Activated CD8-positive, alpha-beta T cell treated with anti-CD3 and anti-CD28 coated beads, Interleukin-2, amount 10 ng/mL, durations not matched to agents 7 days and 5 days (primary cell): ENCODE measurements at regions of chr4 and their contacts with region 1.

Region 1: DNA sequence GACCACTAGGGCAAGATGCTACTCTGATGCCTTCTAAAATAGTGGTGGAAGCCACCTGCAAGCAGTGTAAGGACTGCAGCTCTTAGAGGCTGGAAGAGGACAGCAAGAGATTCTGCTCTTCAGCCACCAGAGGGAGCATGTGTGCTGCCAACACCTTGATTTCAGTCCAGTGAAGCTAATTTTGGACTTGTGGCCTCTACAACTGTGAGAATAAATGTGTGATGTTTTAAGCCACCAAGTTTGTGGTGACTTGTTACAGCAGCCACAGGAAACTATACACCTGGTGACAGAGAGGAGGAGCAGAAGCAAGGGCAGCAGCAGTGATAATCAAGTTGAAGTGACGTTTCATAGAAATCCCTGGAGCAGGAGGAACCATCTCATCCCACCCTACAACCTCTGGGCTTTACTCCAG is 55.9 kb downstream of the FGFBP1 start:
- DNase-seq: peak; percentile 67
- ATAC-seq: peak; percentile 79
- H3K4me3 Mint-ChIP-seq: no peak overlapping the region
- H3K27ac Mint-ChIP-seq: no peak overlapping the region
- H3K4me1 Mint-ChIP-seq: peaks cover 3% of the 10 kb centered on the region
- H3K27me3 Mint-ChIP-seq: peaks cover 11% of the 10 kb centered on the region

Region 2: GRCh38 chr4:15805583-15806517 is 76.8 kb before region 1 on chr4:
- CTCF ChIA-PET with region 1: interaction called, 35 read pairs
- POLR2A ChIA-PET with region 1: no interaction called
- DNase-seq: peak; percentile 63
- ATAC-seq: peak; percentile 64
- H3K4me3 Mint-ChIP-seq: no peak overlapping the region
- H3K27ac Mint-ChIP-seq: peak overlapping the region; percentile 21
- H3K4me1 Mint-ChIP-seq: peaks cover 65% of the 10 kb centered on the region
- H3K27me3 Mint-ChIP-seq: no peaks in the 10 kb centered on the region

Region 3: DNA sequence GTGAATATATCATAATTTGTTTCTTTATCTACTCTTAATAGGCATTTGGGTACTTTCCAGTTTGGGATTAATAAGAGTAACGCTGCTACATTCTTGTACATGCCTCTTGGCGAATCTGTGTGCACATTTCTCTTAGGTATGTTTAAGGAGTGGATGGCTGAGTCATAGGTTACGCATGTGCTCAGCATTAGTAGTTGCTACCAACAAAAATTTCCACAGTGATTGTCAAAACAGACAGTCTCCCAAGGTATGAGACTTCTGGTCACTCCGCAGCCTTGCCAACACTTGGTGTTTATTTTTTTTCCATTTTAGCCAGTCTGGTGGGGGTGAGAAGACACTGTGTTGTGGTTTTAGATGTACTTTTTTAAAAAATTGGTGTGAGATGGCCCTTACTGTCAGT is 11.3 kb after region 1 on chr4:
- CTCF ChIA-PET with region 1: interaction called, 14 read pairs
- POLR2A ChIA-PET with region 1: no interaction called
- DNase-seq: no peak
- ATAC-seq: no peak
- H3K4me3 Mint-ChIP-seq: no peak overlapping the region
- H3K27ac Mint-ChIP-seq: no peak overlapping the region
- H3K4me1 Mint-ChIP-seq: no peaks in the 10 kb centered on the region
- H3K27me3 Mint-ChIP-seq: peaks cover 32% of the 10 kb centered on the region

Region 4: GRCh38 chr4:15938182-15938581 is 55.5 kb after region 1 on chr4:
- CTCF ChIA-PET with region 1: interaction called, 12 read pairs
- POLR2A ChIA-PET with region 1: no interaction called
- DNase-seq: no peak
- ATAC-seq: no peak
- H3K4me3 Mint-ChIP-seq: no peak overlapping the region
- H3K27ac Mint-ChIP-seq: no peak overlapping the region
- H3K4me1 Mint-ChIP-seq: peaks cover 4% of the 10 kb centered on the region
- H3K27me3 Mint-ChIP-seq: peaks cover 20% of the 10 kb centered on the region

Region 5: DNA sequence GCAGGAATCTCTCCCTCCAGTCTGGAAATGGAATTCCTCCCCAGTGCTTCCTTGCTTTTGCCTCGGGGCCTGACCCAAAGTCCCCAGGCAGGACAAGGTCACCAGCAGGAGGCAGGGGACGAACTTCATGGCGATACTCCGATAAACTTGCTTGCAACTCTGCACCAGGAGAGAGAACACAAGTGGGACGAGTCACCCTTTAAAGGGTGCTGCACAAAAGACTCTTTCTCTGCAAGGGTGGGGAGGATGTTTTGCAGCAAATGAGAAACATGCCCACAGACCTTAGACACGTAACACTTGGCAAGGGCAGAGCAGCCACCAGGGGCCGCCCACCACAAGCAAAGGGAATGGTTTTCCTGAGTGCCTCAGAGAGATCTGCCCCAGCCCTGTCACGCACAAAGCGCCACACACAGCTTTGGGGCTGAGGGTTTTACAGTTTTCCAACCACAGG is 80.3 kb after region 1 on chr4 and contains the start of gene FGFBP2:
- CTCF ChIA-PET with region 1: interaction called, 33 read pairs
- POLR2A ChIA-PET with region 1: interaction called, 3 read pairs
- DNase-seq: peak; percentile 86
- ATAC-seq: peak; percentile 93
- H3K4me3 Mint-ChIP-seq: peak within 1 kb of the TSS; percentile 71
- H3K27ac Mint-ChIP-seq: peak within 1 kb of the TSS; percentile 76
- H3K4me1 Mint-ChIP-seq: peaks cover 34% of the 10 kb centered on the region
- H3K27me3 Mint-ChIP-seq: peaks cover 18% of the 10 kb centered on the region
- total RNA-seq, gene FGFBP2: 12.0 to 13.0 TPM